Endothelial cell of umbilical vein (primary cell): ENCODE measurements at regions of chr10 and their contacts with region 1.

Region 1: DNA sequence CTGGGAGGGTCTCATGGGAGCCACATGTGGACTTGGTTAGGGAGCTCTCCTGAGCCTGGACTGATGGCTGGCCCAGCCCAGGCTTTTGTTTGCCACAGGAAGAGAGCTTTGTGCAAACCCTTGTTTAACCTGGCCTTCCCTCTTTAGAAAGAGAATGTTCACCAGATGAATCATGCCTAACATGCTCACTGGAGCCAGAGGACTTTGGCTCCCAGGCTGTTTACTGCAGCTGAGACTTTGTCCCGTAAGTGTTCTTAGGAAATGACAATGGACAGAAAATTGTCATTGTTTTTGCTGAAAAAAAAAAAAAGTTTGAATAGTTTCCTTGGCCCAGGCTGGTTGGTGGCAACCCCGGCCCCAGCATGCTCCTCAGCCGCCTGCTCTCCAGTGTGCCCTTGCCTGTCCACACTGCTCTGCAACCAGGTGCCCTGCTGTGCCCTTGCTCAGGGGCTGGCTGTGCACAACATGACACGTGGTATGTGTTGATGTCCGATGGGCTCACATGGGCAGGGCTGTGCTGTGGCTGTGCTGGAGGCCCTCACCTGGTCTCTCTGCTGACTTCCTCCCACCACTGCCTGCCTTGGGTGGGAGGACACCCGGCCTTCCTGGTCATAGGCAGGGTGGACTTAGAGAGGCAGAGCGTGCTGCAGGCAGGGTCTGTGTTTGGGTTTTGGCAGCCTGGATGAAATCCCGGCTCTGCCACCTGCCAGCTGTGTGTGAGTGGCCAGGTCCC is 215.3 kb upstream of the ZNF32 start:
- DNase-seq: peak; percentile 95
- H3K4me3 ChIP-seq: no peak overlapping the region
- H3K27ac ChIP-seq: peak overlapping the region; percentile 93
- H3K4me1 ChIP-seq: peaks cover 58% of the 10 kb centered on the region
- H3K27me3 ChIP-seq: no peaks in the 10 kb centered on the region
- CTCF ChIP-seq: no peak
- POLR2A ChIP-seq: peak; percentile 19

Region 2: DNA sequence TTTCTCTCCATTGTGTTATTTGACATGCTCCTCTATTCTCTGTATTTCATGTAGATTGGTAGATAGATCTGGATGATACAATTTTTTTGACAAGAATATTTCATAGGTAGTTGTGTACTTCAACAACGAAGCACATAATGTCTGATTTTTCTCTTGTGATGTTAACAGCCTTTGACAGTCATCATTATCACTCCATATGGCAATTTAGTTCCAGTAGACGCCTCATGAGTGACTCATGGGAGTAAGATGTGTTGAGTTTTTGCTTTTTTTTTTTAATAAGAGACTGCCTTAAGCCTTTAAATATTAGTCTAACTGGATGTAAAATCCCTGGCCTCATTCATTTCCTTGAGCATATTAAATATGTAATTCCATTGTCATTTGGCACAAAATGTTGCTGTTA is 91.9 kb before region 1 on chr10:
- CTCF ChIA-PET with region 1: no interaction called
- POLR2A ChIA-PET with region 1: no interaction called
- dilution Hi-C with region 1: no loop called
- intact Hi-C with region 1: loop called (anchors 2 kb)
- DNase-seq: no peak
- H3K4me3 ChIP-seq: no peak overlapping the region
- H3K27ac ChIP-seq: no peak overlapping the region
- H3K4me1 ChIP-seq: peaks cover 11% of the 10 kb centered on the region
- H3K27me3 ChIP-seq: no peaks in the 10 kb centered on the region
- CTCF ChIP-seq: no peak
- POLR2A ChIP-seq: no peak

Region 3: DNA sequence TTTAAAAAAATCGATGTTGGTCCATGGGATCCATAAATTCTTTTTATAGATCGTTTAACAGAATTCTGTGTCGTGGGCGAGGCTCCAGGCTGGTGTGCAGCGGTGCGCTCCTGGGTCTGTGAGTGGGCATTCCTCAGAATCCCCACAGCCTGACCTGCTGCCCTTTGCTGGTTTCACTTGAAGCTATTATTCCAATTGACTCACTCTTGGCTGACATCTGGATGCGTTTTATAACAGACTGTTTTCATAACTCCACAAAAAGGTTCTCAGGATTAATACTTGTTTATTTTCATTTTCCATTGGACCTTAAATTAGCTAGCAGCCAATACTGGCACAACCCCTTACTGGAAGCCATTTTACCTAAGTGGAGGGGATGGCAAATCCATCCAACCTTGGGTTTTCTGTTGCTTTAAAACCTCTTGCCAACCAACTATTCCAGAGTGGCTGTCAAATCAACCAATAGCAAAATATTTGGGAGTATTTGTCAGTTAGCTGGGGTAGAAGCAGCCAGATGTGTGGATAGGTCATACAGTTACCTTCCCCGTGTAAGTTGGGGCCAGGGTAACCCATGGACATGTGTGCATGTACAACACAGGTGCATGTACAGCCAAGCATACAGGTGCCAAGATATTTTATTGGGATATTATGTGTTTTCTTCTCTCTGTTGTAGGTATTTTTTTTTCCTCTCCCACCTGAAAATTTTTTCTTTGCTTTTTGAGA is 54.7 kb before region 1 on chr10:
- CTCF ChIA-PET with region 1: no interaction called
- POLR2A ChIA-PET with region 1: no interaction called
- dilution Hi-C with region 1: no loop called
- intact Hi-C with region 1: loop called (anchors 1 kb)
- DNase-seq: peak; percentile 52
- H3K4me3 ChIP-seq: no peak overlapping the region
- H3K27ac ChIP-seq: no peak overlapping the region
- H3K4me1 ChIP-seq: peaks cover 9% of the 10 kb centered on the region
- H3K27me3 ChIP-seq: peaks cover 0 to 3% of the 10 kb centered on the region in 2 experiments
- CTCF ChIP-seq: no peak
- POLR2A ChIP-seq: no peak

Region 4: GRCh38 chr10:43846187-43846680 is 17.8 kb before region 1 on chr10:
- CTCF ChIA-PET with region 1: interaction called, 22 read pairs
- POLR2A ChIA-PET with region 1: interaction called, 3 read pairs
- dilution Hi-C with region 1: no loop called
- intact Hi-C with region 1: loop called (anchors 1 kb)
- DNase-seq: peak; percentile 73
- H3K4me3 ChIP-seq: no peak overlapping the region
- H3K27ac ChIP-seq: peak overlapping the region; percentile 65
- H3K4me1 ChIP-seq: peaks cover 17% of the 10 kb centered on the region
- H3K27me3 ChIP-seq: no peaks in the 10 kb centered on the region
- CTCF ChIP-seq: no peak
- POLR2A ChIP-seq: no peak

Region 5: DNA sequence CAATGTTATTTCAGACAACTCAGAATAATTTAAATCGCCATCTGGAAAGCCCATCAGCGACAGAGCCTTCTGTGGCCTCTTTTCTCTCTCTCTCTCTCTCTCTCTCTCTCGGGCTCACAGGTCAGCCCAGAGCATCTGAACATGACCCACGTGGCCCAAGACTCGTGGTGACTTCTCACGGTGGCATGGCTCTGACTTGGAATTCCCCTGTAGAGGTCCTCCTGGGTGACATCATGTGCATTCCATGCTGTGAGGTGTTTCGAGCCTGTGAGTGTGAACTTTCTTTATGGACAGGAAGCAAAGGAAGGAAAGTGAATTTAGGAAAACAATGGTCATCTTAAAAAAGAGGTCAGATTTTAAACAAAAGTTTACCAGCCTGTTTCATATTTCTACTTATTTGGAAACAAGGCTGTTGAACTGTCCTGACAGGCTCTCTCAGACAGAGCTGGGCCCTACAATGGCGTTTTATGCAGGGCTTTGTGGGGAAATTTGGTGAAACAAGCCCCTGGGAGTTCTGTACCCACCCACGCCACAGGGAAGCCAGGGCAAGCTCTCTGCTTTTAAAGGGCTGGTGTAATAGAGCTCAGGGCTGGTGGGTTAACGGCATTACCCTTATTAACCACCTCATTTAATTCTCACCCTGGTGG is 144.4 kb after region 1 on chr10:
- CTCF ChIA-PET with region 1: no interaction called
- POLR2A ChIA-PET with region 1: no interaction called
- dilution Hi-C with region 1: no loop called
- intact Hi-C with region 1: loop called (anchors 1 kb)
- DNase-seq: peak; percentile 76
- H3K4me3 ChIP-seq: no peak overlapping the region
- H3K27ac ChIP-seq: peak overlapping the region; percentile 90
- H3K4me1 ChIP-seq: peaks cover 18% of the 10 kb centered on the region
- H3K27me3 ChIP-seq: no peaks in the 10 kb centered on the region
- CTCF ChIP-seq: no peak
- POLR2A ChIP-seq: no peak